ENCODE measurements at regions of chr2 and their contacts with region 1.

Region 1: GRCh38 chr2:204691911-204692510 is 146.7 kb downstream of the PARD3B start:
- DNase-seq: peak; percentile 75
- ATAC-seq: peak; percentile 77
- H3K4me3 ChIP-seq: no peak overlapping the region
- H3K27ac ChIP-seq: no peak overlapping the region
- H3K4me1 ChIP-seq: no peaks in the 10 kb centered on the region
- H3K27me3 ChIP-seq: no peaks in the 10 kb centered on the region
- CTCF ChIP-seq: peak; percentile 77
- EP300 ChIP-seq: no peak
- POLR2A ChIP-seq: no peak
- RAD21 ChIP-seq: peak; percentile 66

Region 2: DNA sequence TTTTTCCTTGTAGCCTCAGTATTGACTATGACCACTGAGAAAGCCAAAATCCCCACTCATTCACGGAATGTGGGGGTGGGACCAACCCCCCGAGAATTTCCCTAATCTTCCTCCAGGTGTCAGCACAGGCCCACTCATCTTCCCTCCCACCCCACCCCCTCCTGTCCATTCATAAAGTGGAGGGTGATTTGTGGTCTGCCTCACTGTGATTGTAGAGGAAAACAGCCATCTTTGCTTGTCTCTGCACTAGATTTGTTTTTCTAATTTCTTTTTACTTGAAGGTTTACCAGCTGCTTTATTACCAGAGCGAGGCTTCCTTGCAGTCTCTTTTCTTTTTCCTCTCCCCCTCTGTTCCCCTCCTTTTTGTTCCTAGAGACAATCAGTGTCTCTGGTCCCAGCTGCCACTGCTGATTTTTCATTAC is 583.7 kb before region 1 on chr2:
- CTCF ChIA-PET with region 1: no interaction called
- POLR2A ChIA-PET with region 1: no interaction called
- in situ Hi-C with region 1: no loop called
- intact Hi-C with region 1: loop called (anchors 2 kb)
- DNase-seq: peak; percentile 11
- ATAC-seq: peak; percentile 85
- H3K4me3 ChIP-seq: no peak overlapping the region
- H3K27ac ChIP-seq: no peak overlapping the region
- H3K4me1 ChIP-seq: no peaks in the 10 kb centered on the region
- H3K27me3 ChIP-seq: peaks cover 0 to 12% of the 10 kb centered on the region in 2 experiments; a peak in 2 of 5 replicates
- CTCF ChIP-seq: peak; percentile 52
- EP300 ChIP-seq: no peak
- POLR2A ChIP-seq: no peak
- RAD21 ChIP-seq: no peak

Region 3: DNA sequence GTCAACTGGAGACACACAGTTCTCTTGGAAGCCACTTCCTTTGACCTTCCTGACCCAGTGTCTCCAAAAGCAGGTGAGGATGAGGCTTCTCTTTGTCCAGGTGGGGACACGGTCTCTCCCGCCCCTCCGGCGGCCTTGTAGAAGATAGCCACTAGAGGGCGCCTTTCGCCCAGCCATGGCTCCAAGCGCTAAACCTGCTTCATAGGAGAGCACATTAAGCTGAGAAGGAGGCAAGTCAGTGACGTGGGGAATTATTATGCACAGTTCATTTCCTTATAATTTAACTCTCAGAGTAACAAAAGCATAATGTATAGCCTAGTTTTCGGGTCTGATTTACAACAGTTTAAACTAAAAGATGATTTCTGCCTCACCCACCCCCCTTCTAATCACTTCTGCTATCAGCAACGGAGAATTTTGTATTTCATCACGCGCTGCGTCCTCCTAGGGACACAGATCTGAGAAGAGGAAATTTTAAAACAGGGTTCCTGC is 546.7 kb before region 1 on chr2:
- CTCF ChIA-PET with region 1: no interaction called
- POLR2A ChIA-PET with region 1: no interaction called
- in situ Hi-C with region 1: no loop called
- intact Hi-C with region 1: loop called (anchors 2 kb)
- DNase-seq: peak; percentile 65
- ATAC-seq: peak; percentile 100
- H3K4me3 ChIP-seq: no peak overlapping the region; a peak in 1 of 6 replicates
- H3K27ac ChIP-seq: no peak overlapping the region
- H3K4me1 ChIP-seq: no peaks in the 10 kb centered on the region
- H3K27me3 ChIP-seq: peaks cover 0 to 4% of the 10 kb centered on the region in 2 experiments; a peak in 2 of 5 replicates
- CTCF ChIP-seq: peak; percentile 96
- EP300 ChIP-seq: no peak
- POLR2A ChIP-seq: no peak
- RAD21 ChIP-seq: peak; percentile 80

Region 4: DNA sequence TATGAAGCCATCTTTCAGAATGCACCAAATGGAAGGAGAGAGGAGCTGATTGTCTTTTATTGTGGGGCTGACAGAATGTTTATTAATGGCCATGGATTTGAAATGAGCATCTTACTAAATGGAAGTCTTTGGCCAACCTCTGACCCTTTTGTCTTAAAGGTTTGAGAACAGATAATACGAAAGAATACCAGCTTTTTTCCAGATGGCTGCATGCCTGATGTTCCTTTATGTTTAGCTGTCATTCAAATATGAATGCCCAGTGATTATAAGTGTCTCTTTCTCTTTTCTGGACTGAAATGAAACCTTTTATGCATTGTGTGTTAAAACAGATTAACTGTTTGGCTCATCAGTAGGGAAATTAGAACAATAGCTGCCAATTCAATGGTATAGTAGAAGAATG is 100.8 kb before region 1 on chr2:
- CTCF ChIA-PET with region 1: no interaction called
- POLR2A ChIA-PET with region 1: no interaction called
- in situ Hi-C with region 1: no loop called
- intact Hi-C with region 1: no loop called
- DNase-seq: no peak
- ATAC-seq: no peak
- H3K4me3 ChIP-seq: no peak overlapping the region
- H3K27ac ChIP-seq: no peak overlapping the region
- H3K4me1 ChIP-seq: no peaks in the 10 kb centered on the region
- H3K27me3 ChIP-seq: no peaks in the 10 kb centered on the region
- CTCF ChIP-seq: no peak
- EP300 ChIP-seq: no peak
- POLR2A ChIP-seq: no peak
- RAD21 ChIP-seq: no peak

Region 5: DNA sequence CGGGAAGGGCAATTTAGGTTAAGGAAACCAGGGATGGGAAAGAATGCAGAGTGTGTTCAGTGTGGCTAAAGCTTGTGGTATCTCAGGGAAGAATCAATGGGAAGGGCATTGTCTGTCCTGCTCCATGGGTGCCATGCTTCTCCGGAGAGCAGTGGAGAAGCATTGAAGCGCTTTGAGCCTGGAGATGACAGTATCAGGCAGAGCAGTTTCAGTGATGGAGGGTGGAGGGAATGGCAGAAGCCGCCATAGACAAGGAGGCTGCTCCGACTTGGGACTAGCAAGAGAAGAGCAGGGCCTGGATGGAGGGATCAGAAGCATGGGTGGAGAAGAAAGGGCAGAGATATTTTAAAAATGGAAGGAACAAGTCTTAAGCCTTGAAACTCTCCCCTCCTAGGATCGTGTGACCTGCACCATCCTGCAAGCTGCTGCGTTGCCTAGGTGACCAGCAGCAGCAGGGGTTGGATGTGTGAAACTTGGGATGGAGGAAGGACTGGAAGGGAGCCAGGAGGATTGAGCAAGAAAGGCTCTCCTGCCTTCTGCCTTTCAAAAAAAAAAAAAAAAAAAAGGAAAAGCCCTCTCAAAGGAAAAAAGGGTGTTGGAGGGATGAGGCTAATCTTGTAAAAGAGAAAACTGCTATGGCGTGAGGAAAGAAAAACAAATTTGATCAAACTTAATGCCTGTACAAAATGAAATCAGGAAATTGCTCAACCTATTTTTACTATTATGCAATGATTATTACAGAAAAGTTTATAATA is 496.4 kb after region 1 on chr2:
- CTCF ChIA-PET with region 1: no interaction called
- POLR2A ChIA-PET with region 1: no interaction called
- in situ Hi-C with region 1: no loop called
- intact Hi-C with region 1: no loop called
- DNase-seq: no peak
- ATAC-seq: no peak
- H3K4me3 ChIP-seq: no peak overlapping the region
- H3K27ac ChIP-seq: no peak overlapping the region
- H3K4me1 ChIP-seq: 0 out of 2 replicates have a peak, but pooled peaks cover 8% of the 10 kb centered on the region
- H3K27me3 ChIP-seq: no peaks in the 10 kb centered on the region
- CTCF ChIP-seq: no peak
- EP300 ChIP-seq: no peak
- POLR2A ChIP-seq: no peak
- RAD21 ChIP-seq: no peak

Measured in HepG2 (cell line).